Activated B cell treated with CpG ODN at 0.5 μM for 24 hours (primary cell): ENCODE measurements at regions of chr6 and their contacts with region 1.

Region 1: GRCh38 chr6:45922728-45923351 is 92.8 kb downstream of the CLIC5 start:
- DNase-seq: peak; percentile 26
- ATAC-seq: no peak
- H3K4me3 Mint-ChIP-seq: no peak overlapping the region
- H3K27ac Mint-ChIP-seq: no peak overlapping the region
- H3K4me1 Mint-ChIP-seq: no peaks in the 10 kb centered on the region
- H3K27me3 Mint-ChIP-seq: peaks cover 7% of the 10 kb centered on the region
- CTCF ChIP-seq: peak; percentile 47

Region 2: GRCh38 chr6:44475779-44476434 is 1446.9 kb before region 1 on chr6:
- CTCF ChIA-PET with region 1: interaction called, 30 read pairs
- POLR2A ChIA-PET with region 1: no interaction called
- intact Hi-C with region 1: no loop called
- DNase-seq: peak; percentile 52
- ATAC-seq: peak; percentile 73
- H3K4me3 Mint-ChIP-seq: no peak overlapping the region
- H3K27ac Mint-ChIP-seq: no peak overlapping the region
- H3K4me1 Mint-ChIP-seq: no peaks in the 10 kb centered on the region
- H3K27me3 Mint-ChIP-seq: peaks cover 7% of the 10 kb centered on the region
- CTCF ChIP-seq: peak; percentile 43

Region 3: DNA sequence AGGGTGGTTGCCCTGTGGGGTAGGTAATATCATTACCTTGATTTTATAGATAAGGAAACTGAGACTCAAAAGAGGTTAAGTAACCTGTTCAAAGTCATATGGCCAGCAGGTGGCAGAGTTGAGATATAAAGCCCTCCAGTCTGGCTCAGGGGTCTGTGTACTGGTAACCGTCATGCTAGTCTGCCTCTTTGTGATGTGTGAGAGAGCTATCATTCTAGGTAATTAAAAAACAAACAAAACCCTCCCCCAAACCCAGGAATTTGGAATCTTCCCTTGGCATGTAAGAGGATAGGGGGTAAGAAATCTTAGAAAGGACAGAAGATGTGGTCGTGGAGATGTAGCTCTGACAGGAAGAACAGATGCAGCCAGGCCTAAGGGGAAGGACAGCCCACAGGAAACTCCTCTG is 1329.3 kb before region 1 on chr6:
- CTCF ChIA-PET with region 1: interaction called, 12 read pairs
- POLR2A ChIA-PET with region 1: no interaction called
- intact Hi-C with region 1: loop called (anchors 1 kb)
- DNase-seq: no peak
- ATAC-seq: peak; percentile 42
- H3K4me3 Mint-ChIP-seq: no peak overlapping the region
- H3K27ac Mint-ChIP-seq: no peak overlapping the region
- H3K4me1 Mint-ChIP-seq: no peaks in the 10 kb centered on the region
- H3K27me3 Mint-ChIP-seq: peaks cover 25% of the 10 kb centered on the region
- CTCF ChIP-seq: no peak

Region 4: GRCh38 chr6:44655412-44656342 is 1267.2 kb before region 1 on chr6:
- CTCF ChIA-PET with region 1: interaction called, 176 read pairs
- POLR2A ChIA-PET with region 1: interaction called, 7 read pairs
- intact Hi-C with region 1: loop called (anchors 1 kb)
- DNase-seq: peak; percentile 65
- ATAC-seq: peak; percentile 56
- H3K4me3 Mint-ChIP-seq: no peak overlapping the region
- H3K27ac Mint-ChIP-seq: no peak overlapping the region
- H3K4me1 Mint-ChIP-seq: peaks cover 2% of the 10 kb centered on the region
- H3K27me3 Mint-ChIP-seq: peaks cover 24% of the 10 kb centered on the region
- CTCF ChIP-seq: peak; percentile 71

Region 5: GRCh38 chr6:45086360-45087084 is 836.3 kb before region 1 on chr6:
- CTCF ChIA-PET with region 1: interaction called, 7 read pairs
- POLR2A ChIA-PET with region 1: no interaction called
- intact Hi-C with region 1: loop called (anchors 2 kb)
- DNase-seq: no peak
- ATAC-seq: no peak
- H3K4me3 Mint-ChIP-seq: no peak overlapping the region
- H3K27ac Mint-ChIP-seq: no peak overlapping the region
- H3K4me1 Mint-ChIP-seq: no peaks in the 10 kb centered on the region
- H3K27me3 Mint-ChIP-seq: no peaks in the 10 kb centered on the region
- CTCF ChIP-seq: no peak

Region 6: DNA sequence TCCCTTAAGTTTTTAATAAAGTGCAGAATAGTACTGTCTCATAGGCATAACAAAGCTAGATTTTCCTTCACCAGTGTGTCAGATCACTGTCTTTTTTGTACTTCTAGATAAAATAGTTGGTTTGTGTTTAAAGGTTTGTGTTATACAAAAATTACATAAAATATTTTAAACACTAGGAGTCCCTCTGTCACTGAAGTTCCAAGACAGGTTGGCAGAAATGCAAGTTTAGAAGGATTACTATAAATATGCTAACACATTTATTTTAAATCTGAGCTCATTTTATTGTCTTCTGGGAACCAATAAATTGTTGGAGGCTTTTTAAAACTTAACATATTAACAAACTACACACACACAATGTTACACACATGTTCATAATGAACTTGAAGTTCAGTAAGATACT is 625.5 kb before region 1 on chr6:
- CTCF ChIA-PET with region 1: no interaction called
- POLR2A ChIA-PET with region 1: no interaction called
- intact Hi-C with region 1: loop called (anchors 5 kb)
- DNase-seq: no peak
- ATAC-seq: no peak
- H3K4me3 Mint-ChIP-seq: no peak overlapping the region
- H3K27ac Mint-ChIP-seq: no peak overlapping the region
- H3K4me1 Mint-ChIP-seq: peaks cover 17% of the 10 kb centered on the region
- H3K27me3 Mint-ChIP-seq: no peaks in the 10 kb centered on the region
- CTCF ChIP-seq: no peak

Region 7: GRCh38 chr6:45421709-45422502 is 500.9 kb before region 1 on chr6:
- CTCF ChIA-PET with region 1: interaction called, 9 read pairs
- POLR2A ChIA-PET with region 1: no interaction called
- intact Hi-C with region 1: loop called (anchors 2 kb)
- DNase-seq: peak; percentile 50
- ATAC-seq: peak; percentile 40
- H3K4me3 Mint-ChIP-seq: peak overlapping the region; percentile 90
- H3K27ac Mint-ChIP-seq: peak overlapping the region; percentile 76
- H3K4me1 Mint-ChIP-seq: peaks cover 54% of the 10 kb centered on the region
- H3K27me3 Mint-ChIP-seq: peaks cover 39% of the 10 kb centered on the region
- CTCF ChIP-seq: no peak

Region 8: GRCh38 chr6:45566882-45567281 is 356.0 kb before region 1 on chr6:
- CTCF ChIA-PET with region 1: no interaction called
- POLR2A ChIA-PET with region 1: no interaction called
- intact Hi-C with region 1: no loop called
- DNase-seq: no peak
- ATAC-seq: no peak
- H3K4me3 Mint-ChIP-seq: no peak overlapping the region
- H3K27ac Mint-ChIP-seq: no peak overlapping the region
- H3K4me1 Mint-ChIP-seq: no peaks in the 10 kb centered on the region
- H3K27me3 Mint-ChIP-seq: no peaks in the 10 kb centered on the region
- CTCF ChIP-seq: no peak

Region 9: DNA sequence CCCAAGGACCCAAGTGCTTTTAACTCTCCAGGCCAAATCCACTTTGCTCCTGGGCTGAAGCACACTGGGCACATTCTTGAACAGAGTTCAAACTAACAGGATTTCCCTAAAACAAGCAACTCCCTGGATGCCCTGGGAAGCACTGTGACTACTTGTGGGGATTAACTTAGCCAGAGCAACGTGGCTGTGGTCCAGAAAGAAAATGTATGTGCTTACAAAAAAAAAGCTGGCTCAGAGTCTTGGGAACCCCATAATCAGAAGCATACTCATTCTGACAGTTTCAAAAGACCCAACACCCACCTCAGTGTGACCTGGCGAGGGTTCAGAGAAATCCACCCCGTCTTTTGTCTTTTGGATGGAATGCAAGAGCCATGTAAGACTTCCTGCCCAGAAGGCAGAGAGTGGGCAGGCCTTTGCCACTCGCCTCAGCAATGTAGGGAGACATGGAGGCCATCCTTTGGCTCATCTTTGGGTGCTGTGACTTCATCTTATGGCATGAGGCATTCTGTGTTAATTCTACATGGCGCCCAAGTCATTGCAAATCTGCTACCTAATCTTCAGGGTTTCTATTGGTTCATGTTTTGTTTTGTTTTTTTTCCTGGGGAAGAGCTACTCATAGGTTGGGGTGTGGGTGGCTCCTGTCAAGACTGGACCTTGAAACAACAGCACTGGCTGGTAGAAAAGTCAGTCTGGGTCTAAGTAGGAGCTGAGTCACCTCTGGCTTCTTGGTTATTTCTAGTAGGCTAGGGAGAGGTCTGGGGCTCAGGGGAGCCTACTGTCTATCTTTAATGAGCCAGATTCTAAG is 296.6 kb before region 1 on chr6:
- CTCF ChIA-PET with region 1: no interaction called
- POLR2A ChIA-PET with region 1: no interaction called
- intact Hi-C with region 1: no loop called
- DNase-seq: no peak
- ATAC-seq: no peak
- H3K4me3 Mint-ChIP-seq: no peak overlapping the region
- H3K27ac Mint-ChIP-seq: no peak overlapping the region
- H3K4me1 Mint-ChIP-seq: no peaks in the 10 kb centered on the region
- H3K27me3 Mint-ChIP-seq: no peaks in the 10 kb centered on the region
- CTCF ChIP-seq: no peak